ENCODE measurements at regions of chr9 and their contacts with region 1.

Region 1: DNA sequence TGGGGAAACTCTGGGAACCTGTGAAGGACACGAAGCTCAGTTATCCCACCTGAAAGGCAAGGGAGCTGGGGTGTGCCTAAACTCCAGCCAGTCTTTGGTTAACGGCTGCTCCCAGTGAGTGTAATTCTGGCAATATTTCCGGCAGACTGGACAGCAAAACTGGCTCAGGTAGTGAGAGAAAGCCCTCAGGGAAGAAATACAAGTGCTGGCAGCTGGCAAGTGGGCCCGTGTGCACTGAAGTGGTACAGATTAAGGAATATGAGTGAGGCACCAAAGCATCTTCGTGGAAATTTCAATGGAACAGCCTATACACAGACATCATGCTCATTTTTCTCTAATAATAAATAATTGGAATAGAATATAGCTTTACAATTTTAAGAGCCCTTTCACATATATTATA is 56.2 kb downstream of the ABHD17B start:
- DNase-seq: no peak
- ATAC-seq: no peak
- H3K4me3 Mint-ChIP-seq: no peak overlapping the region
- H3K27ac Mint-ChIP-seq: no peak overlapping the region
- H3K4me1 Mint-ChIP-seq: peaks cover 4% of the 10 kb centered on the region
- H3K27me3 Mint-ChIP-seq: no peaks in the 10 kb centered on the region
- CTCF ChIP-seq: no peak

Region 2: DNA sequence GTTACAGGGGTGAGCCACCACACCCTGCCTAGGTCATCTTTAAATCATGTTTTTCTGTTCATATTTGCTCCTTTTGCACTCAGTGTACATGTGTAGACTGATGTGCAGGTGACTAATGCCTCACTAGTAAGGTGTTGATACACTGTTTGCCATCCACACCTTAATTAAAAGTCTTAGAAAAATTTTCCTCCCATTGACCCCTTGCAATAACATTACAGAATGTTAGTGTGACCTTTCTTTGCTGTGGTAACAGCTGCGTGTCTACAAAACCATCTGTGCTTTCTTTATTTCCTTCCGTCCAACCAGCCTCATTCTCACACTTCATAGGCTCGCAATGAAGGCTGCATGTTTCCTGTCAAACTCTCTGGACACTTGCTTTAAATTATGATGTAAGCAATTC is 79.9 kb before region 1 on chr9:
- CTCF ChIA-PET with region 1: no interaction called
- POLR2A ChIA-PET with region 1: no interaction called
- intact Hi-C with region 1: no loop called
- DNase-seq: no peak
- ATAC-seq: peak; percentile 52
- H3K4me3 Mint-ChIP-seq: no peak overlapping the region
- H3K27ac Mint-ChIP-seq: peak overlapping the region; percentile 43
- H3K4me1 Mint-ChIP-seq: peaks cover 20% of the 10 kb centered on the region
- H3K27me3 Mint-ChIP-seq: no peaks in the 10 kb centered on the region
- CTCF ChIP-seq: no peak

Region 3: GRCh38 chr9:71955300-71955915 is 100.6 kb after region 1 on chr9:
- CTCF ChIA-PET with region 1: no interaction called
- POLR2A ChIA-PET with region 1: interaction called, 12 read pairs
- intact Hi-C with region 1: no loop called
- DNase-seq: no peak
- ATAC-seq: no peak
- H3K4me3 Mint-ChIP-seq: no peak overlapping the region
- H3K27ac Mint-ChIP-seq: no peak overlapping the region
- H3K4me1 Mint-ChIP-seq: no peaks in the 10 kb centered on the region
- H3K27me3 Mint-ChIP-seq: no peaks in the 10 kb centered on the region
- CTCF ChIP-seq: no peak

Region 4: DNA sequence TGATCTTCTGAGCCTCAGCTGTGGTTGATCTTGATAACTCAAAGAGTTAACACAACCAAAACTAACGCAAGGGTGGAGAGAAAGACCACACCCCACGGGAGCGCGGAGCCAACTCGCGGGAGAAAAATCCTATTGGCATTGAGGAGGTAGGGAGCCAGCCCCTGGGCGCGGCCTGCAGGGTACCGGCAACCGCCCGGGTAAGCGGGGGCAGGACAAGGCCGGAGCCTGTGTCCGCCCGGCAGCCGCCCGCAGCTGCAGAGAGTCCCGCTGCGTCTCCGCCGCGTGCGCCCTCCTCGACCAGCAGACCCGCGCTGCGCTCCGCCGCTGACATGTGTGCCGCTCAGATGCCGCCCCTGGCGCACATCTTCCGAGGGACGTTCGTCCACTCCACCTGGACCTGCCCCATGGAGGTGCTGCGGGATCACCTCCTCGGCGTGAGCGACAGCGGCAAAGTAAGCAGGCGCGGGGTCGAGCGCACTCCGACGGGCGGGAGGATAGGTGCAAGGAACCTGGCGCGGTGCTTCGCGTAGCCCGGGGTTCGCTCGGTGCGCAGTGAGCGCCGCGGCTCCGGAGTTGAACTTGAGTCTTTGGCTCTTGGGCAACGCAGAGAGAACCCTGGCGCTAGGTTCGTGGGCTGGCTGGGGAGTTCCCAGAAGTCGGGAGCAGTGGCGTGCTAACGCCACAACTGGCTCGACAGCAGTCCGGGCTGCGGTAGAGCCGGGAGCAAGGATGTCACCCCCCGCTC is 294.6 kb after region 1 on chr9 and contains the start of gene GDA:
- CTCF ChIA-PET with region 1: no interaction called
- POLR2A ChIA-PET with region 1: no interaction called
- intact Hi-C with region 1: loop called (anchors 5 kb)
- DNase-seq: no peak
- ATAC-seq: no peak
- H3K4me3 Mint-ChIP-seq: peak within 1 kb of the TSS; percentile 50
- H3K27ac Mint-ChIP-seq: no peak within 1 kb of the TSS
- H3K4me1 Mint-ChIP-seq: peaks cover 17% of the 10 kb centered on the region
- H3K27me3 Mint-ChIP-seq: peaks cover 41% of the 10 kb centered on the region
- CTCF ChIP-seq: no peak
- total RNA-seq, gene GDA: 0.18 TPM in 1 of 2 replicates, not detected in the other